Naive thymus-derived CD4-positive, alpha-beta T cell (primary cell): ENCODE measurements at regions of chr17 and their contacts with region 1.

Region 1: GRCh38 chr17:63549946-63550807 is at the start of gene DCAF7:
- DNase-seq: peak; percentile 93 to 99 (median 99)
- ATAC-seq: peak; percentile 97
- H3K4me3 ChIP-seq: peak within 1 kb of the TSS; percentile 93
- H3K4me3 Mint-ChIP-seq: peak within 1 kb of the TSS; percentile 85 to 99 (median 98)
- H3K27ac ChIP-seq: peak within 1 kb of the TSS; percentile 90
- H3K27ac Mint-ChIP-seq: peak within 1 kb of the TSS; percentile 94 to 97 (median 96)
- H3K4me1 ChIP-seq: peaks cover 18 to 27% of the 10 kb centered on the region in 2 donors
- H3K4me1 Mint-ChIP-seq: peaks cover 32 to 50% (median 41%) of the 10 kb centered on the region in 7 donors
- H3K27me3 ChIP-seq: no peaks in the 10 kb centered on the region
- H3K27me3 Mint-ChIP-seq: peaks cover 0 to 2% (median 0%) of the 10 kb centered on the region in 5 donors
- total RNA-seq, gene DCAF7: 26.0 to 128 (median 70.0) TPM

Region 2: DNA sequence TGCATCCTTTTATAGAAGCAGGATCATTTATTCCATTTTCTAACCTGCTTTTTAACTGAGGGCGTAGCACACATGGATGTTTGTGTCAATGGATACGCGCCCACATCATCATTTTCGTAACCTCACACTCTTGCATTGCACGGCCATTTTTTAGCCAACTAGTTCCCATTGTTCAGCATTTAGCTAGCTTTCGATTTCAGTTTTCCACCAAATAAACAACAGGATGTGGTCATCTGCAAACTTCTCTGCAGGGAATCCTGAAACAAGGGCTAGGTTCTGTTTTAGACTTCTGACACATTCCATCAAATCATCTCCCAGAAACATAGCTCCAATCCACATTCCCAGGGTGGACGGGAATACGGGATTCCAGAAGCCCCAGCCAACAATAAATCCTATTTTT is 110.5 kb before region 1 on chr17:
- CTCF ChIA-PET with region 1: no interaction called
- POLR2A ChIA-PET with region 1: no interaction called
- intact Hi-C with region 1: loop called in 1 of 2 experiments (anchors 2 kb)
- DNase-seq: peak in 4 of 9 donors; percentile 21 to 45 (median 34)
- ATAC-seq: peak; percentile 30
- H3K4me3 ChIP-seq: peak overlapping the region; percentile 8
- H3K4me3 Mint-ChIP-seq: peak overlapping the region in 9 of 10 donors; percentile 37 to 74 (median 56)
- H3K27ac ChIP-seq: no peak overlapping the region
- H3K27ac Mint-ChIP-seq: peak overlapping the region; percentile 76 to 93 (median 85)
- H3K4me1 ChIP-seq: peaks cover 19 to 27% of the 10 kb centered on the region in 2 donors
- H3K4me1 Mint-ChIP-seq: peaks cover 21 to 52% (median 28%) of the 10 kb centered on the region in 7 donors
- H3K27me3 ChIP-seq: no peaks in the 10 kb centered on the region
- H3K27me3 Mint-ChIP-seq: peaks cover 0 to 10% (median 0%) of the 10 kb centered on the region in 5 donors

Region 3: DNA sequence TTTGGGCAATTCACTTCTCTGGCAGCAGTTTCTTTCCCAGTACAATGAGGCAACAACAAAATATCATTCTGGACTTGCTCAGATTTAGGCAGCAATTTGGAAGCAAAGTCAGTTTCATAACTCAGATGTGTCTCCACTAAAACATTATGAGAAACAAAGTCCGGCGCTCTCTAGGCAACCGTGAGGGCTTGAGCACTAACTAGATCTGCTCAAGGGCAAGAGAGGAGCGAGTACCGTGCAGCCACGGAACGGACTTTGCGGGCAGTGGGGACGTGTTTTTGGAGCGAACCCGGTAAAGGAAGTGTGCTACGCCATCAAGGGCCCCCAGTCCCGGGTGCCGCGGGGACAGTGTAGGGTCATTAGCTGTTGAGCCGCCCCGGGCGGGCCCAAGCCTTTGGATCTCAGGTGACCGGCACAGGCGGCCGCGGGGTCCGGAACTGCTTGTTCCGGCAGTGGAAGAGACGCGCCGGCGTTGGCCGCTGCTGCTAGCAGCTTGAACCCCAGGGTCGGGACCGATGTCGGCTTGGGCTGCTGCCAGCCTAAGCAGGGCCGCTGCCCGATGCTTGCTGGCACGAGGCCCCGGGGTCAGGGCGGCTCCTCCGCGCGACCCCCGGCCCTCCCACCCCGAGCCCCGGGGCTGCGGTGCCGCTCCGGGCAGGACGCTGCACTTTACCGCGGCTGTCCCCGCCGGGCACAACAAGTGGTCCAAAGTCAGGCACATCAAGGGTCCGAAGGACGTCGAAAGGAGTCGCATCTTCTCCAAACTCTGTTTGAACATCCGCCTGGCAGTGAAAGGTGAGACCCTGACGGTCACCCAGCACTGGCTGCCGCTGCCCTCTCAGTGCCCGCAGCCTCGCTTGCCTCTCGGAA is 50.6 kb after region 1 on chr17 and contains the start of gene TACO1:
- CTCF ChIA-PET with region 1: interaction called, 8 read pairs
- POLR2A ChIA-PET with region 1: interaction called, 13 read pairs
- intact Hi-C with region 1: loop called (anchors 1 to 2 kb)
- DNase-seq: peak; percentile 54 to 83 (median 71)
- ATAC-seq: peak; percentile 96
- H3K4me3 ChIP-seq: peak within 1 kb of the TSS; percentile 68
- H3K4me3 Mint-ChIP-seq: peak within 1 kb of the TSS; percentile 92 to 97 (median 95)
- H3K27ac ChIP-seq: peak within 1 kb of the TSS; percentile 86
- H3K27ac Mint-ChIP-seq: peak within 1 kb of the TSS; percentile 93 to 98 (median 97)
- H3K4me1 ChIP-seq: peaks cover 17 to 34% of the 10 kb centered on the region in 2 donors
- H3K4me1 Mint-ChIP-seq: peaks cover 19 to 38% (median 25%) of the 10 kb centered on the region in 7 donors
- H3K27me3 ChIP-seq: no peaks in the 10 kb centered on the region
- H3K27me3 Mint-ChIP-seq: no peaks in the 10 kb centered on the region
- total RNA-seq, gene TACO1: 11.1 to 20.3 (median 15.2) TPM

Region 4: GRCh38 chr17:63741221-63742049 is 191.3 kb after region 1 on chr17 and contains the start of gene STRADA:
- CTCF ChIA-PET with region 1: no interaction called
- POLR2A ChIA-PET with region 1: no interaction called
- intact Hi-C with region 1: loop called (anchors 1 to 2 kb)
- DNase-seq: peak; percentile 95 to 99 (median 98)
- ATAC-seq: peak; percentile 97
- H3K4me3 ChIP-seq: peak within 1 kb of the TSS; percentile 74
- H3K4me3 Mint-ChIP-seq: peak within 1 kb of the TSS; percentile 83 to 98 (median 89)
- H3K27ac ChIP-seq: peak within 1 kb of the TSS; percentile 96
- H3K27ac Mint-ChIP-seq: peak within 1 kb of the TSS; percentile 88 to 99 (median 93)
- H3K4me1 ChIP-seq: peaks cover 0 to 8% of the 10 kb centered on the region in 2 donors
- H3K4me1 Mint-ChIP-seq: peaks cover 6 to 36% (median 24%) of the 10 kb centered on the region in 7 donors
- H3K27me3 ChIP-seq: no peaks in the 10 kb centered on the region
- H3K27me3 Mint-ChIP-seq: no peaks in the 10 kb centered on the region
- total RNA-seq, gene STRADA: 51.0 to 69.7 (median 54.2) TPM

Region 5: GRCh38 chr17:63842540-63843386 is 292.6 kb after region 1 on chr17 and contains the start of gene SMARCD2:
- CTCF ChIA-PET with region 1: no interaction called
- POLR2A ChIA-PET with region 1: interaction called, 3 read pairs
- intact Hi-C with region 1: loop called (anchors 1 to 2 kb)
- DNase-seq: peak; percentile 94 to 99 (median 98)
- ATAC-seq: peak; percentile 96
- H3K4me3 ChIP-seq: peak within 1 kb of the TSS; percentile 87
- H3K4me3 Mint-ChIP-seq: peak within 1 kb of the TSS; percentile 92 to 98 (median 95)
- H3K27ac ChIP-seq: peak within 1 kb of the TSS; percentile 96
- H3K27ac Mint-ChIP-seq: peak within 1 kb of the TSS; percentile 87 to 95 (median 92)
- H3K4me1 ChIP-seq: peaks cover 34 to 36% of the 10 kb centered on the region in 2 donors
- H3K4me1 Mint-ChIP-seq: peaks cover 27 to 52% (median 44%) of the 10 kb centered on the region in 7 donors
- H3K27me3 ChIP-seq: no peaks in the 10 kb centered on the region
- H3K27me3 Mint-ChIP-seq: no peaks in the 10 kb centered on the region
- total RNA-seq, gene SMARCD2: 102 to 148 (median 109) TPM

Region 6: DNA sequence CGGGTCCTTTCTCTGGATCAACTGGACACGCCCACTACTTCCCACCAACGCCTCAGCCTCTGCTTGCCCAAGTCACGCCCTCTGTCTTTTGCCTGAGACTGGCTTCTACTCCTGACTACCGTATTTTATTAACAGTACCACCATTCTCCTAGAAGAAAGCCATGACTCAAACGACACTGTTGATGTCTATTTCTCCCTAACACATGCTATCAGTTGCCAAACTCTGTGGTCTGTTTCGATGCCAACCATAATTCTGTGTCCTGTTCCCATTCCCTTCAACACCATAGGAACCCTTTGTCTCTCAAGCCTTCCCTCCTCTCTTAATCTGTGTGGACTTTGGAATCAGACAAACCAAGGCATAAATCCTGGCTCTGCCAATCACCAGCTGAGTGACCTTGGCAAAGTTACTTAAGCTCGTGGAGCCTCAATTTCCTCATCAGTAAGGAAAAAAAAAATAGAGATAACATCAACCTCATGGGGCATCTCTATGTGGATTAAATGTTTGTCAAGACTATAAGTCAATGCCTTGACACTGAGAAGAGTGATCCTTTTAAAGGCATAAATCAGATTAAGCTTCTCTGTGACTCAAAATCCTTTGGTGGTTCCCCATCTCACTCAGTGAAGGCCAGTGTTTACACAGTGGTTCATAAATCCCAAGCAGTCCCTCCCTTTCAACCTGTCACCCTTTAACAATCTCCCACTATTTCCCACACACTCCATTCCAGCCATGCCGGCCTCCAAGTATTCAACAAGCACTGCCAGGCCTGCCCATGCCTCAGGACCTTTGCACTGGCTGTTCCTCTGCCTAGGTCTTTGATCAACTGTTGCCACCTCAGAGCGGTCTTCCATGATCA is 534.1 kb after region 1 on chr17:
- CTCF ChIA-PET with region 1: no interaction called
- POLR2A ChIA-PET with region 1: no interaction called
- intact Hi-C with region 1: no loop called
- DNase-seq: no peak
- ATAC-seq: peak; percentile 39
- H3K4me3 ChIP-seq: no peak overlapping the region
- H3K4me3 Mint-ChIP-seq: no peak overlapping the region
- H3K27ac ChIP-seq: no peak overlapping the region
- H3K27ac Mint-ChIP-seq: no peak overlapping the region
- H3K4me1 ChIP-seq: peaks cover 60 to 79% of the 10 kb centered on the region in 2 donors
- H3K4me1 Mint-ChIP-seq: peaks cover 18 to 35% (median 27%) of the 10 kb centered on the region in 7 donors
- H3K27me3 ChIP-seq: no peaks in the 10 kb centered on the region
- H3K27me3 Mint-ChIP-seq: no peaks in the 10 kb centered on the region